Naive thymus-derived CD4-positive, alpha-beta T cell (primary cell): ENCODE measurements at regions of chr12 and their contacts with region 1.

Region 1: DNA sequence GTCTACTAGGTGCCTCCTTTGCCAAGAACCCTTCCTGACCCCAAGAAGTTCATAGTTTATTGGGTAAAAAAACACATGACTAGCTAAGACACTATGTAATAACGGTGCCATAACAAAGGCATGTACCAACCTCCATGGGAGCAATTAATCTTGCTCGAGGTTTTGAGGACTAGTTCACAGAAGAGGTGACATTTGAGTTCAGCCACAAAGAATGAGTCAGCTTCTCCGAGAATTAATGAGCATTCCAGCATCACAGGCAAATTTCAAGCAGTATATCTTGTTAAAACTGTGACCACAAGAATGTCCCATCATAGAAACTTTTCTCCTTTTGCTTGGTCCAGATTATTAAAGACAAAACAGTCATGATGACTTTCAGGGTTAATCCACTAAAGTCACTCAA is 113.0 kb upstream of the RAP1B start:
- DNase-seq: no peak
- ATAC-seq: peak; percentile 26
- H3K4me3 ChIP-seq: no peak overlapping the region
- H3K4me3 Mint-ChIP-seq: peak overlapping the region in 1 of 10 donors; percentile 50
- H3K27ac ChIP-seq: no peak overlapping the region
- H3K27ac Mint-ChIP-seq: peak overlapping the region in 1 of 9 donors; percentile 73
- H3K4me1 ChIP-seq: peaks cover 0 to 7% of the 10 kb centered on the region in 2 donors
- H3K4me1 Mint-ChIP-seq: peaks cover 0 to 29% (median 18%) of the 10 kb centered on the region in 7 donors
- H3K27me3 ChIP-seq: no peaks in the 10 kb centered on the region
- H3K27me3 Mint-ChIP-seq: no peaks in the 10 kb centered on the region

Region 2: DNA sequence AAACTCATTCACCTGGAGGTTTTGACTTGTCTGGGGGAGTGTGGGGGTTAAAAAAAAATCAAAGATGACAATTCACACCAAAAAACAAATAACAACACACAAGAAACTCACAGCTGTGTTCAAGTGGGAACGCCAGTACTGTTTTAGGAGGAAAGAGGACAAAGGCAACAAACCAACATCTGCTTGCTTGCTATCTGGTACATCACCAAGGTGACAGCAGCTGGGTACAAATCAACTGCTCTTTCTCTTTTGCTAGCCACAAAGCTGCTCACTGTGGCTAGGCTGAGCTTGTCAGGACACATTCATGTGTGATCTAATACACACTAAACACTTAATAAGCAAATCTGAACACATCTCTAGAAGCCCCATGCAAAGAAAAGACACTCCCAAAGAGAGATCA is 15.0 kb before region 1 on chr12:
- CTCF ChIA-PET with region 1: no interaction called
- POLR2A ChIA-PET with region 1: interaction called, 4 read pairs
- intact Hi-C with region 1: loop called (anchors 2 kb)
- DNase-seq: no peak
- ATAC-seq: peak; percentile 67
- H3K4me3 ChIP-seq: no peak overlapping the region
- H3K4me3 Mint-ChIP-seq: peak overlapping the region in 1 of 10 donors; percentile 74
- H3K27ac ChIP-seq: no peak overlapping the region
- H3K27ac Mint-ChIP-seq: peak overlapping the region in 5 of 9 donors; percentile 8 to 86 (median 65)
- H3K4me1 ChIP-seq: peaks cover 0 to 27% of the 10 kb centered on the region in 2 donors
- H3K4me1 Mint-ChIP-seq: peaks cover 10 to 46% (median 27%) of the 10 kb centered on the region in 7 donors
- H3K27me3 ChIP-seq: no peaks in the 10 kb centered on the region
- H3K27me3 Mint-ChIP-seq: no peaks in the 10 kb centered on the region

Region 3: DNA sequence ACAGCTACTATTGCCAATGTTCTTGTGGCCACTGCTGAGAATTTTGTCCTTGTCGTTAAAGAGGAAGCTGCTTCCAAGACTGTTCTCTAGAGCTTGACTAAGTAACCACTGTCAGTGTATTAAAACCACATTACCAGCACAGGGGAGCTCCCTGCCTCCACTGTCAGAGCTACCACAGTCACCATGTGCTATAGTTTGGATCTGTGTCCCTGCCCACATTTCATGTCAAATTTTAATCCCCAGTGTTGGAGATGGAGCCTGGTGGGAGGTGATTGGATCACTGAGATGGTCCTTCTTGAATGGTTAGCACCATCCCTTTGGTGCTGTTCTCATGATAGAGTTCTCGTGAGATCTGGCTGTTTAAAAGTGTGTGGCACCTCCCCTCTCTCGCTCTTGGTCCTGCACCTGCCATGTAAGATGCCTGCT is 89.8 kb after region 1 on chr12:
- CTCF ChIA-PET with region 1: no interaction called
- POLR2A ChIA-PET with region 1: no interaction called
- intact Hi-C with region 1: no loop called
- DNase-seq: peak in 8 of 9 donors; percentile 39 to 66 (median 53)
- ATAC-seq: peak; percentile 72
- H3K4me3 ChIP-seq: no peak overlapping the region
- H3K4me3 Mint-ChIP-seq: peak overlapping the region; percentile 10 to 70 (median 64)
- H3K27ac ChIP-seq: no peak overlapping the region
- H3K27ac Mint-ChIP-seq: peak overlapping the region; percentile 78 to 96 (median 88)
- H3K4me1 ChIP-seq: peaks cover 26 to 37% of the 10 kb centered on the region in 2 donors
- H3K4me1 Mint-ChIP-seq: peaks cover 33 to 82% (median 60%) of the 10 kb centered on the region in 7 donors
- H3K27me3 ChIP-seq: no peaks in the 10 kb centered on the region
- H3K27me3 Mint-ChIP-seq: no peaks in the 10 kb centered on the region

Region 4: DNA sequence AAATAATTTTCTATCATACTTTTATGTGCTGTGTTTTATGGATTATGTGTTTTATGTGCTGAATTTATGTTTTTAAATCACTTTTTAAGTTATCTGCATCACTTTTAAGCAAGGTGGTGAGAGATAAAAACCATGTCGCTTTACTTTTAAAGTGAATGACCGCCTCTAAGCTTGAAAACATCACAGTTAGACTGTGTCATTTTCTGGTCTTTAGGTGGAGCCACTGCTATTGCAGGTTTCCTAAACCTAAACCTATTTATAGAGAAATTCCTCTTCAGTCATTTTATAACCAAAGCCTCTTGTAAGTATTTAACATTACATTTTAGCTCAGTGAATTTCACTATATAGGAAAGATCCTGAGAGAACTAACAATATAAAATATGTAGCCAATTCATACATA is 289.2 kb after region 1 on chr12:
- CTCF ChIA-PET with region 1: no interaction called
- POLR2A ChIA-PET with region 1: no interaction called
- intact Hi-C with region 1: no loop called
- DNase-seq: no peak
- ATAC-seq: no peak
- H3K4me3 ChIP-seq: no peak overlapping the region
- H3K4me3 Mint-ChIP-seq: no peak overlapping the region
- H3K27ac ChIP-seq: no peak overlapping the region
- H3K27ac Mint-ChIP-seq: no peak overlapping the region
- H3K4me1 ChIP-seq: no peaks in the 10 kb centered on the region
- H3K4me1 Mint-ChIP-seq: peaks cover 0 to 5% (median 0%) of the 10 kb centered on the region in 7 donors
- H3K27me3 ChIP-seq: no peaks in the 10 kb centered on the region
- H3K27me3 Mint-ChIP-seq: no peaks in the 10 kb centered on the region